ENCODE measurements at regions of chr9 and their contacts with region 1.

Region 1: DNA sequence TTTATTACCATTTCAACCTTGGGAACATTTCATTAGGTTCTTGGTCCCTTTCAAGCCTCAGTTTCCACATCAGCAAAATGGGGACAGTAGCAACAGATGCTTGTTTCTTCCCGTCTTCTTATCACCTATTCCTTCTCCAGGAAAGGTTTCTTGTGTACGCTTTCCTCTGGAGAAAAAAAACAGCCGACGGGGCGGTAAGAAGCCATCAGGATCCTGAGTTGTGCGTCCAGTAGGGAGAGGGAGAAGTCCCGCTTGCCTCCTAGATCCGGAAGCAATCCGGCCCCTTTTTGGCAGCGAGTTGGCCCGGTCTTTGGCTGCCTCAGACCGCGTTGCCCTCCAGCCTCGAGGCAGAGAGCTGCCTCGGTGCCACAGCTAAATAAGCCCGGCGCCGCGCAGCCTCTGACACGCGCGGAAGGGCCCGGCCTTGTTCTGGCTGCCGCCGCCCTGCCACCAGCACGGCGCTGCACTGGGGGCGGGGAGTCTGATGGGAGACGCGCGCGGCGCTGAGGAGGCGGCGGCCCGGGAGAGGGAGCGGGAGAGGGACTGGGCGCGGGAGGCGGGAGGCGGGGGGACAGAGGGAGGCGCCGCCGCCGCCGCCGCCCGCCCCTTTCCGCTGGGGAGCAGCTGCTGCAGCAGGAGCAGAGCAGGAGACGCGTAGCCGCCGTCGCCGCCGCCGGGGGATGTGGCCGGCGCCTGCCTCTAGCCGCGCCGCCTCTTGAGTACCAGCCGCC is at the start of gene SLC44A1:
- DNase-seq: peak; percentile 95 to 100 (median 97)

Region 2: DNA sequence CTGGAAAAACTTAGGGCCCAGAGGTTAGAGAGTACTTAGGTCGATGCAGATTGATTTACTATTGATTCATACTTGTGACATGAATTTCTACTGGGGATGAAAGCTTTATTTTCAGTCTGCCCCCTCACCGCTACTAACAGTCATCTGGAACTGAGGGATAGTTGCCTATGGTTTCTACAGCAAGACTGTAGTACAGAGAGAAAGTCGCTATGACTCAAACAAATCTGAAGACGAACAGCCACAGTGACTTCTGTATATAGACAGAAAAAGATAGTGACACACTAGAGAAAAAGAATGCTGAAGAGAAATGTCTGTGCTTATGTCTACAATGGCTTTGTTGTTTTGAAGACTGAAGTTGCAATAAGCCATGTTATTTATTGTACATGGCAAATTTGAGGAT is 532.6 kb before region 1 on chr9:
- intact Hi-C with region 1: no loop called
- DNase-seq: no peak

Region 3: DNA sequence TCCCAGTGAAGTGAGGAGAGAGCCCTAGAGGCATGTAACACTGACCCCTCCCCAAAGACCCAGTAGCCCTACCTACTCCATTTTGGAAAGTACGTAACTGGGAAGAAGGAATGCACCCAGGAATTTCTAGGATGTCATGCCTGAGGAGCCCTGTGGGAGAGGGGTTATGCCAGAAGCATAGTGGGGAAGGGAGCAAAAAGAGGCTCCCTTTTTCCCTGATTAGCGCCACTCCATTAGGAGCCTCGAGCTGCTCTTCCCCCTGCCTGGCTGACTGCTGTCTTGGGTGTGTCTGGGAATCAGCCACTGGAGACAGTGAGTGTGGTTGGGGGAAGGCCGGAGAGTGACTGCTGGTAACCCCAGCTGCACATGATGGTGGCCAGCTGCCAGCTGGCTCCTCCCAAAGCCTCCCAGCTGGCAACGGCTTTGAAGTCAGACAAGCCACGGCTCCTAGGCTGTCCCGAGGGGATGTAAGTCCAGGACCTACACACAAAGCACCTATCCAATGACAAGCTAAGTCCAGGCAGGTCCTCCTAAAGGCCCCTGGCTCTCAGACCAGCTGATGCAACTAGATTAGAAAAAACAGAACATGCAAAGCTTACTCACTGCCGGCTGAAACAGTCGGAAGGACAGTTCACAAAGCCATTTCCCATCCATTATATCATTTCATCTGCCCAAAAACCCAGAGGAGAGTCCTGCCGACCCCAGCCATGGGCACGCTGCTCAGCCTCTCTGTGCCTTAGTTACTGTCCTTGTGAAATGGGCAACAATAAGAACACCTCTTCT is 179.7 kb before region 1 on chr9:
- intact Hi-C with region 1: loop called (anchors 10 kb)
- DNase-seq: peak; percentile 64 to 97 (median 76)

Region 4: GRCh38 chr9:105168870-105169319 is 75.3 kb before region 1 on chr9:
- intact Hi-C with region 1: loop called (anchors 10 kb)
- DNase-seq: no peak

Region 5: DNA sequence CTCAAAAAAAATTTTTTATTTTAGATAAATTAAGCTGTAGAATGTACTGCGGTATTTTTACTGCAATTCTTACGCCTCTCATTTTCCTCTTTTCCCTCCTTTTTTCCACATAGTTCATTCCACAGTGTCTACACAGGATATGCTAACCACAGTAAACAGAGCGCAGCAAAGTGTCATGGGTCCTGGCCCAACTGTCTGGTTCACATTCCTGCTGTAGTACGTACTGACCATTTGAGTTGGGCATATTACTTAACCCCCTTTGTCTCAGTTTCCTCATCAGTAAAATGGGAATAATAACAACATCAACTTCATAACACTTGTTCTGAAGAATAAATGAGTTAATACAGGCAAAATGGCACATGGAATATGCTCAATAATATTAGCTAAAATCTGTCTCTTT is 41.9 kb after region 1 on chr9:
- intact Hi-C with region 1: loop called (anchors 5 kb)
- DNase-seq: no peak

Region 6: DNA sequence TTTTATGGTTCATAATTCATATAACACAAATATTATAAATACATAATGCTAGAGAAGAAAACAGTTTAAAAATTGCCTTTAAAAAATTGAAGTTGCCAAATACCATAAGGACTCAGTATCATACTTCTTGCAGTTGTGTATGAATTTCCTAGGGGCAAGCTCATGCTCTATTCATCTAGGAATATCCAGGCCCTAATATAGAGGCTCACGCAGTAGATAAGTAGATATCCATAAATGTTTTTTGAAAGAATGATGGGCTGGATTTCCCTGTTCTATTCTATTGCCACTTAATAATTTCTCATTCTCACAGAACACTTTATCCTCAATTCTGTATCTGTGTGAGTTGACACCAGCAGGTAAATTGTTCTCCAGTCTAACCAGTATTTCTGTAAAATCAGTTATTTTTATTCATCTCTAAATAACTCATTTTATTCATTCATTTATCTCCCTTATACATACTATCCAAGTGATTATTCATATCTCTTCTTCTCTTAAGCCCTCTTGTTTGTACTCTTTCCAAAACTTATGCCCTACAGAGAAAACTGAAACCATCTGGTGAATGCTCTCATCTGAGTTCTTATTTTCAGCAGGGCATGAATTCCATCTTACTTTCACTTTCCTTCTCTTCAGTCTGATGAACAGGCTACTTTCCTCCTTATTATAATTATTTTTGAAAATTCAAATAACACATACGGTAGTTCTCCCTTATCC is 97.4 kb after region 1 on chr9:
- intact Hi-C with region 1: no loop called
- DNase-seq: no peak

Region 7: GRCh38 chr9:105414947-105415661 is 170.9 kb after region 1 on chr9:
- intact Hi-C with region 1: loop called (anchors 2 kb)
- DNase-seq: peak in 6 of 10 donors; percentile 16 to 84 (median 64)